PC-9 (cell line): ENCODE measurements at regions of chr3 and their contacts with region 1.

Region 1: GRCh38 chr3:130093741-130094391 is 12.2 kb downstream of the ALG1L2 start:
- DNase-seq: peak; percentile 62 to 66
- H3K4me3 ChIP-seq: peak overlapping the region; percentile 46; the same call in 1 of the 2 replicates
- H3K27ac ChIP-seq: peak overlapping the region; percentile 77
- H3K4me1 ChIP-seq: peaks cover 26% of the 10 kb centered on the region
- H3K27me3 ChIP-seq: no peaks in the 10 kb centered on the region
- CTCF ChIP-seq: no peak

Region 2: GRCh38 chr3:129908381-129908780 is 185.5 kb before region 1 on chr3:
- CTCF ChIA-PET with region 1: interaction called, 13 read pairs
- POLR2A ChIA-PET with region 1: no interaction called
- intact Hi-C with region 1: no loop called
- DNase-seq: peak; percentile 74 to 95
- H3K4me3 ChIP-seq: peak overlapping the region; percentile 38; the same call in 1 of the 2 replicates
- H3K27ac ChIP-seq: peak overlapping the region; percentile 72
- H3K4me1 ChIP-seq: peaks cover 27% of the 10 kb centered on the region
- H3K27me3 ChIP-seq: no peaks in the 10 kb centered on the region
- CTCF ChIP-seq: no peak

Region 3: DNA sequence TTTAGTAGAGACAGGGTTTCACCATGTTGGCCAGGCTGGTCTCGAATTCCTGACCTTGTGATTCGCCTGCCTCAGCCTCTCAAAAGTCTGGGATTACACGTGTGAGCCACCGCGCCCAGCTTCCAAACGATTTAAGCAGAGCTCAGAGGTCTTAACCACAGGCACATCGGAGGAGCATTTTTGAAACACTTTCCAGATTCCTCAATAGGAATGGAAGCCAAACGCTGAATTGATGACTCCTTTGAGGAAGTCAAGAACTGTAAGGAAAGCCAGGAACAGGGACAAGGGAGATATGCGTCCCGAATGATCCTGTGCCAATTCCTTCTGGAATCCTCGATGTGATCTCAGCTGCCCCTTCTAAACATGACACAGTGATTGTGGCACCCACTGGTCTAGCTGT is 79.3 kb before region 1 on chr3:
- CTCF ChIA-PET with region 1: interaction called, 4 read pairs
- POLR2A ChIA-PET with region 1: interaction called, 6 read pairs
- intact Hi-C with region 1: loop called (anchors 10 kb)
- DNase-seq: no peak
- H3K4me3 ChIP-seq: no peak overlapping the region
- H3K27ac ChIP-seq: no peak overlapping the region
- H3K4me1 ChIP-seq: no peaks in the 10 kb centered on the region
- H3K27me3 ChIP-seq: peaks cover 3% of the 10 kb centered on the region; the same call in 1 of the 2 replicates
- CTCF ChIP-seq: no peak

Region 4: GRCh38 chr3:130111185-130111864 is 17.5 kb after region 1 on chr3:
- CTCF ChIA-PET with region 1: interaction called, 4 read pairs
- POLR2A ChIA-PET with region 1: no interaction called
- intact Hi-C with region 1: loop called (anchors 2 kb)
- DNase-seq: peak; percentile 89 to 99
- H3K4me3 ChIP-seq: peak overlapping the region; percentile 88
- H3K27ac ChIP-seq: peak overlapping the region; percentile 78
- H3K4me1 ChIP-seq: peaks cover 23% of the 10 kb centered on the region
- H3K27me3 ChIP-seq: no peaks in the 10 kb centered on the region
- CTCF ChIP-seq: no peak